Activated CD8-positive, alpha-beta memory T cell treated with anti-CD3 and anti-CD28 coated beads, Interleukin-2, amount 10 ng/mL, durations not matched to agents 7 days and 5 days (primary cell): ENCODE measurements at regions of chr5 and their contacts with region 1.

Region 1: GRCh38 chr5:141512390-141512910 is 23.6 kb downstream of the PCDHGC5 start:
- DNase-seq: peak; percentile 89
- ATAC-seq: peak; percentile 62
- H3K4me3 Mint-ChIP-seq: peak overlapping the region; percentile 36
- H3K27ac Mint-ChIP-seq: peak overlapping the region; percentile 52
- H3K4me1 Mint-ChIP-seq: peaks cover 24% of the 10 kb centered on the region
- H3K27me3 Mint-ChIP-seq: peaks cover 3% of the 10 kb centered on the region

Region 2: DNA sequence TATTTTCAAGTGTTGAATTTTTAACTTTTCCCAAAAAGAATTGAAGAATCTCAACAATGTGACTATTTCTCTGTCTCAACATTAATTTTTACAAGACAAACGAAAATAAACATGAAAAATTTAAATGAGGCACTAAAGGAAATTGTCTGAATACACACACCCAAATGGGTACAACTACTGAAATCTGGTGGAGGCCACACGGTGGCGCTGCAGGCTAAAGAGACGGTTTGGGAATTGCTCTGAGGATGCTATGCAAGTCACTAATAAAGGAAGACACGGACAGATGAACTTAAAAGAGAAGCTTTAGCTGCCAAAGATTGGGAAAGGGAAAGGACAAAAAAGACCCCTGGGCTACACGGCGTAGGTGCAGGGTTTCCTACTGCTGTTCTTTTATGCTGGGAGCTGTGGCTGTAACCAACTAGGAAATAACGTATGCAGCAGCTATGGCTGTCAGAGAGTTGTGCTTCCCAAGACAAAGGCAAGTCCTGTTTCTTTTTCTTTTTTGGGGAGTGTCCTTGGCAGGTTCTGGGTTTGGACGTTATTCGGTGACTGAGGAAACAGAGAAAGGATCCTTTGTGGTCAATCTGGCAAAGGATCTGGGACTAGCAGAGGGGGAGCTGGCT is 320.2 kb before region 1 on chr5 and contains the start of gene PCDHB10:
- CTCF ChIA-PET with region 1: no interaction called
- DNase-seq: no peak
- ATAC-seq: no peak
- H3K4me3 Mint-ChIP-seq: no peak within 1 kb of the TSS
- H3K27ac Mint-ChIP-seq: no peak within 1 kb of the TSS
- H3K4me1 Mint-ChIP-seq: no peaks in the 10 kb centered on the region
- H3K27me3 Mint-ChIP-seq: peaks cover 5% of the 10 kb centered on the region
- total RNA-seq, gene PCDHB10: not detected

Region 3: DNA sequence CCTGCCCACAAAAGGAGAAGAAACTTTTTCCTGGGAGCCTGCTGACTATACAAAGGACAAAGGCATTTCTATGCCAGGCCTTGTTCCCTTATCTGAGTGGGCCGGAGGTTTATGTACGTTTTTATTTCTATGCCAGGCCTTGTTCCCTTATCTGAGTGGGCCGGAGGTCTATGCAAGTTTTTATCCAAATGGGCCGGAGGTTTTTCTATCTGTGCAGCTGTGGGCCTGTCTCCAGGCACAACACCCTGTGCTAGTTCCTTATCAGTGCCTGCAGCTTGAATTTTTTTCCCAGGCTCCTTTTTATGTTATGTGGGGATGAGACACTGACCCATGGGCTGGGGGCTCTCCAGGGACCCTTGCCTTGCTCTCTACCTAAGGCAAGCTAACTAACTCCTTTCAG is 214.1 kb before region 1 on chr5:
- CTCF ChIA-PET with region 1: no interaction called
- DNase-seq: no peak
- ATAC-seq: no peak
- H3K4me3 Mint-ChIP-seq: no peak overlapping the region
- H3K27ac Mint-ChIP-seq: no peak overlapping the region
- H3K4me1 Mint-ChIP-seq: no peaks in the 10 kb centered on the region
- H3K27me3 Mint-ChIP-seq: no peaks in the 10 kb centered on the region

Region 4: DNA sequence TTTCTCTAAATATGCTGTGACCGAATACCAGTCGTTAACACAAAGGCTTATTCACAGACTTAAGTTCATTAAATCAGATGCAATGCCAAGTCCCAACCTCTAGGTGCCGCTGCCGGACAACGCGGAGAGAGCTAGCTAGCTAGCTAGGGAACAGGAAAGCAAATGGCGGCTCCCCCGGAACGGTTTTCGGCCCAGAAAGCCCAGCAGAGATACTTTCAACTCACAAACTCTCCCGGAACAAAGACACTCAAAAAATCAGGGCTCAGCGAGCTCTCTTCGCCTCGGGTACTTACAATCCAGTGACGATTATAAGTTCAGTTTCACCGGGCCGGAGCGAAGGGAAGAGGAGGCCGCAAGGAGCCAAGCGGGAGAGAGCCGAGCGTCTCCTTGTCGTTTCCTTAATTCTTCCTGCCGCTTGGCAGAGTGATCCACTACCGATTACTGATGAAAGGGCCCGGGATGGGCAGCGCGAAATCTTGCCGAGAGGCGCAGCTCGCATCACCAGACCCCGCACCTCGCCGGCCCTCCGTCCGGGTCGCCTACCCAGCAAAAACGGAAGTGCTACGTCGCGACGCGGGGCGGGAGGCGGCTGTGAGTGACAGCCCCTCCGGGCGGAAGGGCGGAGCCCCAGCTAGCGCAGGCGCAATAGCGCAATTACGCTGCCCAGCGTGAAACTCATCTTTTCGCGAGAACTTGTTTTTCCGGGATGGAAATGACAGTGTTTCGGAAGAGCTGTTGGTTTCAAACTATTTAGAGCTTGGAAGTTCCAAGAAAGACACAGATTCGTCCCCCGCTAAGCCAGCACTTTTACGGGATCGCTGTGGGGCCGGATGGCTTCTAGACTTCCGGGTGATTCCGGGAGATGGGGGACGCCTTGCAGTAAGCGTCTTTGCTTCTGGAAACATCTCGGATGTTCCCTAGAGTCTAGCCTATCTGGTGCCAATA is 192.0 kb before region 1 on chr5 and contains the start of gene TAF7:
- CTCF ChIA-PET with region 1: interaction called, 33 read pairs
- DNase-seq: peak; percentile 95
- ATAC-seq: peak; percentile 95
- H3K4me3 Mint-ChIP-seq: peak within 1 kb of the TSS; percentile 97
- H3K27ac Mint-ChIP-seq: peak within 1 kb of the TSS; percentile 100
- H3K4me1 Mint-ChIP-seq: peaks cover 32% of the 10 kb centered on the region
- H3K27me3 Mint-ChIP-seq: no peaks in the 10 kb centered on the region
- total RNA-seq, gene TAF7: 57.3 to 64.6 TPM

Region 5: GRCh38 chr5:141420855-141421496 is 91.5 kb before region 1 on chr5 and contains the start of gene PCDHGA11:
- CTCF ChIA-PET with region 1: interaction called, 20 read pairs
- DNase-seq: peak; percentile 57
- ATAC-seq: no peak
- H3K4me3 Mint-ChIP-seq: peak within 1 kb of the TSS; percentile 65
- H3K27ac Mint-ChIP-seq: peak within 1 kb of the TSS; percentile 54
- H3K4me1 Mint-ChIP-seq: peaks cover 9% of the 10 kb centered on the region
- H3K27me3 Mint-ChIP-seq: peaks cover 76% of the 10 kb centered on the region
- total RNA-seq, gene PCDHGA11: not detected

Region 6: DNA sequence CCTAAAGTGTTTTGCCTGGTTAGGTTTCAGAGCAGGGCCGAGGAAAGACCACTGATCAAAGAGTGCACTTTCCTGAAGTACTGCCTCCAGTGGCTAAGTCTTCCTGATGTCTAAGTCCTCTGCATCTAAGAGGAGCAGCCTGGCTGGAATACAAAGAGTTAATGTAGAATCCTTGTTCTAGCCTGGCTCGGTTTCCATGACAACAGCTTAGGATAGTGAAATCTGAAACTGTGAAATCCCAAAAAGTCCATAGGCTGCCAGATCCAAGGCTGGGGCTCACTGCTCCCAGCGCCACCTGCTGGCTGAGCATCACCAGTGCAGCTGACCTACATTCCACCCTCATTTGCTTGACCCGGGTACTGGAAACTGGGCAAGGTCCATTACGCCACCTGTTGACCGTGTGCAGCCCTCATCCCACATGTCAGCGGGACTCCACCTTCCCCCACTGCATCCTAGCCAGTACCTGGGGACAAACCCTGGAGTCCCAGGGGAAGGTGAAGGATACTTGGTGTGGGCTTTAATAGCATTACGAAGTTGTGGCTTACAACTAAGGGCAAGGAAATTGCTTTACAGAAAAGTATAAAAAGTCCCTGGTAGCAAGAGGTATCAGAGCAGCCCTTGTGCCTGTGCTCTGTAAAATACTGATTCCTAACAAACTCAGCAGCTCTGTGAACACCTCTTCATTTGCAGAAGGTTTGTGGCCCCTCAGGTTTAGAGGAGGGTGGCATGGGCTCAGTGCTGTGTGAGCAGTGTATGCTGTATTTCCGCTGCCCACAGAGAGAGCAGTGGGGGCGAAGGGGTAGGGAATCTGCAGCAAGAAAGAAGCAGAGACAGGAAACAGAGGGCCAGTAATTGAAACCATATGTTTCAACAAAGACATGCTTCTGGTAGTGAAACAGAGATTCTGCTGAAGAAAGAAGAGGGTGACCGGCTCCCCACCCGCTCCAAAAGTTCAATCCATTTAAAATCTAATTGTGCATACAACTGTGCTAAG is 12.5 kb after region 1 on chr5:
- CTCF ChIA-PET with region 1: interaction called, 58 read pairs
- DNase-seq: peak; percentile 56
- ATAC-seq: peak; percentile 67
- H3K4me3 Mint-ChIP-seq: no peak overlapping the region
- H3K27ac Mint-ChIP-seq: peak overlapping the region; percentile 41
- H3K4me1 Mint-ChIP-seq: peaks cover 28% of the 10 kb centered on the region
- H3K27me3 Mint-ChIP-seq: no peaks in the 10 kb centered on the region

Region 7: GRCh38 chr5:141564216-141564692 is 51.8 kb after region 1 on chr5:
- CTCF ChIA-PET with region 1: interaction called, 14 read pairs
- DNase-seq: peak; percentile 79
- ATAC-seq: peak; percentile 95
- H3K4me3 Mint-ChIP-seq: no peak overlapping the region
- H3K27ac Mint-ChIP-seq: peak overlapping the region; percentile 85
- H3K4me1 Mint-ChIP-seq: peaks cover 24% of the 10 kb centered on the region
- H3K27me3 Mint-ChIP-seq: no peaks in the 10 kb centered on the region

Region 8: GRCh38 chr5:141992349-141992963 is 480.0 kb after region 1 on chr5:
- CTCF ChIA-PET with region 1: no interaction called
- DNase-seq: peak; percentile 84
- ATAC-seq: peak; percentile 71
- H3K4me3 Mint-ChIP-seq: no peak overlapping the region
- H3K27ac Mint-ChIP-seq: no peak overlapping the region
- H3K4me1 Mint-ChIP-seq: no peaks in the 10 kb centered on the region
- H3K27me3 Mint-ChIP-seq: no peaks in the 10 kb centered on the region